B cell (primary cell): ENCODE measurements at regions of chr22 and their contacts with region 1.

Region 1: DNA sequence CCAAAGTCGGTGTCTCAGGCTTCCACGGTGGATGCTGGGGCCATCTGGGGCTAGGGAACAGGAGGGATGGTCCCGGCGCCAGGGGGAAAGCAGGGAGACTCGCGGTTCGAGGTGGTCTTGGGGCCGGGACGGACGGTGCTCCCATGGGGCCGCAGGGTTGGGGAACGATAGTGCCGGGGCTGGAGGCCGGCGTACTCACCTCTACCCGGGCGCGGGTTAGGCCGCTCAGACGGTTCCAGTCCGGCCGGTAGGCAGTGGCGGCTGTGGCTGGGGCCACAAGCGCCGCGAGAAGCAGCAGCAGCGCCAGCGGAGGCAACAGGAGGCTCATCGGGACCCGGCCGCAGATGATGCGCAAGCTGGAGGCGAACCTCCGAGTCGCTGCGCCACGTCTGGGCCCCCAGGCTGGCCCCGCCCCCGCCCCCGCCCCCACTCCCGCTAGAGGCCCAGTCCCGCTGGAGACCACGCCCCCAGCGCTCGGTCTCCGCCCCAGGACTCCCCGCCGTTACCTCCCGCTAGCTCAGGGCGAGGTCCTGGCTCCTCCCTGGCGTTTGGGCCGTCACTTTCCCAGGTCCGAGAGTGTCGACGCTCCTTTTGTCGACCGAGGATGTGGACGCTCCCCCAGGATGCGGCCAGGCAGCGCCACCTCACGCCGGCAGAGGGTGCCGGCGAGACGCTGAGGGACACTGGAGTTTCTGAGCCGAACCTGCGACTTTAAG is at the start of gene SELENOM:
- DNase-seq: peak; percentile 90
- ATAC-seq: peak; percentile 97
- H3K4me3 ChIP-seq: peak within 1 kb of the TSS; percentile 42 to 91 (median 72)
- H3K4me3 Mint-ChIP-seq: peak within 1 kb of the TSS; percentile 96
- H3K27ac ChIP-seq: peak within 1 kb of the TSS; percentile 37 to 57
- H3K27ac Mint-ChIP-seq: peak within 1 kb of the TSS; percentile 86
- H3K4me1 ChIP-seq: peaks cover 16 to 17% of the 10 kb centered on the region in 2 donors
- H3K4me1 Mint-ChIP-seq: peaks cover 22% of the 10 kb centered on the region
- H3K27me3 ChIP-seq: no peaks in the 10 kb centered on the region
- H3K27me3 Mint-ChIP-seq: no peaks in the 10 kb centered on the region
- CTCF ChIP-seq: peak; percentile 77
- total RNA-seq, gene SELENOM: 18.4 and 23.6 TPM in 2 replicates

Region 2: DNA sequence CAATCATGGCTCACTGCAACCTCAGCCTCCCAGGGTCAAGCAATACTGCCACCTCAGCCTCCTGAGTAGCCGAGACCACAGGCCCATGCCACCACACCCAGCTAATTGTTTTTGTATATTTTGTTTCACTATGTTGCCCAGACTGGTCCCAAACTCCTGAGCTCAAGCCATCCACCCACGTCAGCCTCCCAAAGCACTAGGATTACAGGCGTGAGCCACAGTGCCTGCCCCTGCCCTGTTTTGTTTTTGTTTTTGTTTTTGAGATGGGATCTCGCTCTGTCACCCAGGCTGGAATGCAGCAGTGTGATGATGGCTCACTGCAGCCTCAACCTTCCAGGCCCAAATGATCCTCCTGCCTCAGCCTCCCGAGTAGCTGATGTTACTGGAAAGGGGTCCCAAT is 84.8 kb before region 1 on chr22:
- CTCF ChIA-PET with region 1: no interaction called
- POLR2A ChIA-PET with region 1: no interaction called
- intact Hi-C with region 1: no loop called
- DNase-seq: no peak
- ATAC-seq: no peak
- H3K4me3 ChIP-seq: no peak overlapping the region
- H3K4me3 Mint-ChIP-seq: no peak overlapping the region
- H3K27ac ChIP-seq: no peak overlapping the region
- H3K27ac Mint-ChIP-seq: no peak overlapping the region
- H3K4me1 ChIP-seq: no peaks in the 10 kb centered on the region
- H3K4me1 Mint-ChIP-seq: no peaks in the 10 kb centered on the region
- H3K27me3 ChIP-seq: no peaks in the 10 kb centered on the region
- H3K27me3 Mint-ChIP-seq: peaks cover 2% of the 10 kb centered on the region
- CTCF ChIP-seq: no peak

Region 3: GRCh38 chr22:31160328-31160978 is 53.1 kb after region 1 on chr22:
- CTCF ChIA-PET with region 1: interaction called, 3 read pairs
- POLR2A ChIA-PET with region 1: no interaction called
- intact Hi-C with region 1: loop called (anchors 1 kb)
- DNase-seq: no peak
- ATAC-seq: peak; percentile 29
- H3K4me3 ChIP-seq: peak overlapping the region; percentile 65 to 81 (median 74)
- H3K4me3 Mint-ChIP-seq: peak overlapping the region; percentile 95
- H3K27ac ChIP-seq: peak overlapping the region; percentile 82 to 83
- H3K27ac Mint-ChIP-seq: peak overlapping the region; percentile 95
- H3K4me1 ChIP-seq: peaks cover 19 to 24% of the 10 kb centered on the region in 2 donors
- H3K4me1 Mint-ChIP-seq: peaks cover 33% of the 10 kb centered on the region
- H3K27me3 ChIP-seq: peaks cover 0 to 2% (median 0%) of the 10 kb centered on the region in 4 experiments
- H3K27me3 Mint-ChIP-seq: no peaks in the 10 kb centered on the region
- CTCF ChIP-seq: no peak